HCT116 (cell line): ENCODE measurements at regions of chr2 and their contacts with region 1.

Region 1: GRCh38 chr2:237572021-237572741 is 5.8 kb downstream of the PRLH start:
- DNase-seq: peak; percentile 79
- ATAC-seq: peak; percentile 90
- H3K4me3 ChIP-seq: no peak overlapping the region
- H3K27ac ChIP-seq: no peak overlapping the region
- H3K4me1 ChIP-seq: peaks cover 12 to 30% of the 10 kb centered on the region in 2 experiments
- H3K27me3 ChIP-seq: no peaks in the 10 kb centered on the region
- CTCF ChIP-seq: peak; percentile 93 to 98 (median 97)
- POLR2A ChIP-seq: no peak
- RAD21 ChIP-seq: peak; percentile 99

Region 2: GRCh38 chr2:237474931-237475703 is 97.1 kb before region 1 on chr2:
- CTCF ChIA-PET with region 1: interaction called, 44 read pairs
- POLR2A ChIA-PET with region 1: no interaction called
- RAD21 ChIA-PET with region 1: interaction called, 9 to 16 read pairs
- intact Hi-C with region 1: loop called (anchors 1 kb)
- DNase-seq: peak; percentile 37
- ATAC-seq: peak; percentile 85
- H3K4me3 ChIP-seq: peak overlapping the region; percentile 63 to 70
- H3K27ac ChIP-seq: peak overlapping the region; percentile 75
- H3K4me1 ChIP-seq: peaks cover 3 to 24% of the 10 kb centered on the region in 2 experiments; a peak in 3 of 4 replicates
- H3K27me3 ChIP-seq: no peaks in the 10 kb centered on the region
- CTCF ChIP-seq: peak; percentile 59 to 75 (median 71)
- POLR2A ChIP-seq: no peak
- RAD21 ChIP-seq: peak; percentile 64